CD8-positive, alpha-beta memory T cell (primary cell): ENCODE measurements at regions of chr13 and their contacts with region 1.

Region 1: GRCh38 chr13:45417790-45418534 is at the start of gene SLC25A30:
- DNase-seq: peak; percentile 89 to 95 (median 92)
- H3K4me3 ChIP-seq: peak within 1 kb of the TSS; percentile 96
- H3K4me3 Mint-ChIP-seq: peak within 1 kb of the TSS; percentile 86 to 99 (median 97)
- H3K27ac ChIP-seq: peak within 1 kb of the TSS; percentile 62
- H3K27ac Mint-ChIP-seq: peak within 1 kb of the TSS; percentile 91 to 99 (median 96)
- H3K4me1 ChIP-seq: peaks cover 31% of the 10 kb centered on the region
- H3K4me1 Mint-ChIP-seq: peaks cover 21 to 38% (median 32%) of the 10 kb centered on the region in 3 donors
- H3K27me3 ChIP-seq: no peaks in the 10 kb centered on the region
- H3K27me3 Mint-ChIP-seq: peaks cover 0 to 3% of the 10 kb centered on the region in 2 donors
- total RNA-seq, gene SLC25A30: 27.2 to 29.8 TPM

Region 2: GRCh38 chr13:44591316-44591715 is 826.6 kb before region 1 on chr13:
- CTCF ChIA-PET with region 1: no interaction called
- POLR2A ChIA-PET with region 1: no interaction called
- DNase-seq: no peak
- H3K4me3 ChIP-seq: no peak overlapping the region
- H3K4me3 Mint-ChIP-seq: no peak overlapping the region
- H3K27ac ChIP-seq: no peak overlapping the region
- H3K27ac Mint-ChIP-seq: no peak overlapping the region
- H3K4me1 ChIP-seq: no peaks in the 10 kb centered on the region
- H3K4me1 Mint-ChIP-seq: peaks cover 0 to 6% (median 5%) of the 10 kb centered on the region in 3 donors
- H3K27me3 ChIP-seq: no peaks in the 10 kb centered on the region
- H3K27me3 Mint-ChIP-seq: peaks cover 11 to 40% of the 10 kb centered on the region in 2 donors

Region 3: DNA sequence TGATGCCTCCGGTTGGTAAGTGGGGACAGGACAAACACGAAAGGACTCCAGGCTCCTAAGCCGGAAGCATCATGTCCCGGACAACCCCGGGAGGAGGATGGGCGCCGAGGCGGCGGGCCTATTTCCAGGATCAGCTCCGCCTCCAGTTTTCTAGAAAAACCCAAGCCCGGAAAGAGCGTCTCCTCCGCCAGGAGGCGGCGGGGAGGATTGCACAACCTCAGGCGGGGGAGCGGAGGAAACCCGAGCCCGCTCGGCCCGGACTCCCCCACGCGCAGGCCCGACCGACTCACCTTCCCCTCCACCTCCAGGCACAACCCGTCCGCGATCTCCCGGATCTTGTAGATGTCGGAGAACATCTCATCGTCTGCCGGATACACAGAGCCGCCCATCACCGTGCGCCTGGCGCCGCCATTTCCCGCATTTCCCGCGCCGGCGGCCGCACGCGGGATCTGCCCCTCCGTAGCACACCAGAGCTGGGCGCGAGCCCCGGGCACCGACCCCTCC is 77.5 kb before region 1 on chr13:
- CTCF ChIA-PET with region 1: interaction called, 5 read pairs
- POLR2A ChIA-PET with region 1: interaction called, 20 read pairs
- DNase-seq: peak; percentile 74 to 89 (median 80)
- H3K4me3 ChIP-seq: peak overlapping the region; percentile 71
- H3K4me3 Mint-ChIP-seq: peak overlapping the region; percentile 95 to 100 (median 98)
- H3K27ac ChIP-seq: peak overlapping the region; percentile 96
- H3K27ac Mint-ChIP-seq: peak overlapping the region; percentile 78 to 100 (median 100)
- H3K4me1 ChIP-seq: peaks cover 55% of the 10 kb centered on the region
- H3K4me1 Mint-ChIP-seq: peaks cover 62 to 80% (median 72%) of the 10 kb centered on the region in 3 donors
- H3K27me3 ChIP-seq: no peaks in the 10 kb centered on the region
- H3K27me3 Mint-ChIP-seq: peaks cover 0 to 6% of the 10 kb centered on the region in 2 donors

Region 4: DNA sequence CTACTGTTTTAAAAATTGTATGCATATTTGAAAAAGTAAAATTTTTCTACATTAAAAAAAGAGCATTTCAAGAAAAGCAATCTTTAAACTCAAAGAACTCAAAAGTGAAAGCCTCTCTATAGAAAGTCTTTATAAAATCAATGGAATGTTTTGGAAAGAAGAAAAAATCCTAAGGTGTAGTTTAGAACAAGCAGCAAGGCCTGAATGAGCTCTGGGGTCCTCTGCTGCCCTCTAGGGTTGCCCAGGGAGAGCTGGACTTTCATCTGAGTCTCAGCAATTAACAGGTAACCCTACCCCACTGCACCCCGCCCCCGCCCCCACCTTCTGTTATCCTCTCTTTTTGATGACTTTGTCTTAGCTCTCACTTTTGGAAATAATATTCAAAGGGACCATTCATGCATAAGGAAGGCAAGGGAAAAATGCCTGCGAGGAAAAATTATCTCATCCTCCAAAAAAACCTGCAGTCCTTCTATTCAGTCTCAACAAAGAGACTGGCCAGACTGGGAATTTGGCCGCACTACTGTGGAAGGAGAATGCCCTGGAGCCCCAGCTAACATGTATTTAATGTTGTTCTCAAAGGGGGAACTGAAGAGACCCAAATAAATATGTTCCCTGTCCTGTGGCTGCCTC is 23.9 kb before region 1 on chr13:
- CTCF ChIA-PET with region 1: interaction called, 3 read pairs
- POLR2A ChIA-PET with region 1: interaction called, 20 read pairs
- DNase-seq: peak in 1 of 5 donors; percentile 15
- H3K4me3 ChIP-seq: no peak overlapping the region
- H3K4me3 Mint-ChIP-seq: no peak overlapping the region
- H3K27ac ChIP-seq: no peak overlapping the region
- H3K27ac Mint-ChIP-seq: peak overlapping the region in 4 of 8 donors; percentile 33 to 68 (median 48)
- H3K4me1 ChIP-seq: peaks cover 30% of the 10 kb centered on the region
- H3K4me1 Mint-ChIP-seq: peaks cover 39 to 48% (median 47%) of the 10 kb centered on the region in 3 donors
- H3K27me3 ChIP-seq: no peaks in the 10 kb centered on the region
- H3K27me3 Mint-ChIP-seq: no peaks in the 10 kb centered on the region

Region 5: GRCh38 chr13:45464687-45465453 is 46.9 kb after region 1 on chr13 and contains the start of gene COG3:
- CTCF ChIA-PET with region 1: interaction called, 11 read pairs
- POLR2A ChIA-PET with region 1: interaction called, 23 read pairs
- DNase-seq: peak; percentile 93 to 97 (median 96)
- H3K4me3 ChIP-seq: peak within 1 kb of the TSS; percentile 58
- H3K4me3 Mint-ChIP-seq: peak within 1 kb of the TSS; percentile 91 to 97 (median 93)
- H3K27ac ChIP-seq: peak within 1 kb of the TSS; percentile 89
- H3K27ac Mint-ChIP-seq: peak within 1 kb of the TSS; percentile 76 to 98 (median 94)
- H3K4me1 ChIP-seq: peaks cover 40% of the 10 kb centered on the region
- H3K4me1 Mint-ChIP-seq: peaks cover 43 to 57% (median 53%) of the 10 kb centered on the region in 3 donors
- H3K27me3 ChIP-seq: no peaks in the 10 kb centered on the region
- H3K27me3 Mint-ChIP-seq: peaks cover 0 to 3% of the 10 kb centered on the region in 2 donors
- total RNA-seq, gene COG3: 19.3 to 20.2 TPM